OCI-LY7 (cell line): ENCODE measurements at regions of chr7 and their contacts with region 1.

Region 1: GRCh38 chr7:83655951-83656556 is 7.1 kb upstream of the SEMA3E start:
- DNase-seq: peak; percentile 34
- H3K4me3 ChIP-seq: no peak overlapping the region
- H3K27ac ChIP-seq: no peak overlapping the region
- H3K4me1 ChIP-seq: no peaks in the 10 kb centered on the region
- CTCF ChIP-seq: peak; percentile 80

Region 2: GRCh38 chr7:83410989-83411591 is 245.0 kb before region 1 on chr7:
- CTCF ChIA-PET with region 1: no interaction called
- POLR2A ChIA-PET with region 1: interaction called, 3 read pairs
- intact Hi-C with region 1: loop called (anchors 1 kb)
- DNase-seq: peak; percentile 43
- H3K4me3 ChIP-seq: no peak overlapping the region
- H3K27ac ChIP-seq: no peak overlapping the region
- H3K4me1 ChIP-seq: no peaks in the 10 kb centered on the region
- CTCF ChIP-seq: peak; percentile 86

Region 3: DNA sequence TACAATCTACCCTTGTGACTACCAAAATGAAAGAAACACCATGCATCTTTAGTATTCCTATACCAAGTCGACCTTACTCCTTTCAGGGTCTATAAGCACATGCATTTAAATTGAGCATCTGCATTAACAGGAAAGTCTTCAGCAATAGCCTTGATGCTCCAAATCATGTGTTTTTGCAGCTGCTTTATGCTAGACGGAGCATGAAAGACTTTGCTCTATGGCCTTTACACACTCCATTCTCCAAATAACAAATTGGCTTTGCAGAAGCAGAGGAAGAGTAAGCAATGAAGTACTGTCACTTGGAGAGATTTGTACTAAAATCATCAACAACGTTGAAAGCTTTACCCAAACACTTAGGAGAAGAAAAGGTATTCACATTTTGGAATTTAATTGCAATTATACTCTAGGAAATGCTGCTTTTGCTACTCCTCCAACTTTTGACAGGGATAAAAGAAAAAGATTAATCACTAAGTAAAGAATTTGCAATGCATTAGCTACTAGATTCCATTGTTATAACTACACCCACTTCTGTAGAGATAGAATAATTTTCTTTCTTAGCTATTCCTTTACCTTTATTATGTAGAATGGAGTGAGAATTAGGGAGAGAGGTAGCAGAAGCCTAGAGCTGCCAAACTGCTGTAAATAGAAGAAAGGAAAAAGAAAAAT is 138.9 kb before region 1 on chr7:
- CTCF ChIA-PET with region 1: no interaction called
- POLR2A ChIA-PET with region 1: no interaction called
- intact Hi-C with region 1: loop called (anchors 10 kb)
- DNase-seq: no peak
- H3K4me3 ChIP-seq: no peak overlapping the region
- H3K27ac ChIP-seq: no peak overlapping the region
- H3K4me1 ChIP-seq: no peaks in the 10 kb centered on the region
- CTCF ChIP-seq: no peak